ENCODE measurements at regions of chr10 and their contacts with region 1.

Region 1: DNA sequence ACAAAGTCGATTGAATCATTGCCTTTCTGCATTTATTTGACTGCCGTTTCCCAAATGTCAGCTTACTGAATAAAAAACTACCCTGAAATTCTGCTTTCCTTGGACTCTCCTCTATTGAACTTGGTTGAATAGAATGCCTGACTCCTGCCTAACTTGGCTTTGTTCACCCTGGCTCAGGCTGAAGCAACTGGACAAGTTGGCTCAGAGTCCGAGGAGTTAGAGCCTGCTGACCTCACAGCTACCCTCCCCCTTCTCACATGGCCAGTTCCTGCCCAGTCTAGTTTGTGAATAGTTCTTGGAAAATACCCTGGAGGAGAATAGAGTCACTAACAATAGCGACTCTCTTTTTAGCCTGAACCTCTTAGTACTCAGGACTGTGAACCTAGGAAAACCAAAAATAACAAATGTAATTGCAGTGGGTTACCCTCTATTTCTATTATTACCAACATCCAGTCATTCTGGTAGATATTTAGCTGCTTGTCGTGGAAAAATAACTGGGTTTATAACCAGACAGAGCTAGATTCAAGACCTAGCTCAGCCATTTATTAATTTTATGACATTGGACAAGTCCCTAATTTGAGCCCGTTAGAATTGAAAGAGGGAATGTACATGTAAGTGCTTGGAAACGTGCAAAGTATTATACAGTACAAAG is 17.3 kb upstream of the NRBF2 start:
- DNase-seq: peak; percentile 83
- ATAC-seq: peak; percentile 96

Region 2: GRCh38 chr10:63064706-63065105 is 51.2 kb before region 1 on chr10:
- intact Hi-C with region 1: no loop called
- DNase-seq: no peak
- ATAC-seq: no peak

Region 3: DNA sequence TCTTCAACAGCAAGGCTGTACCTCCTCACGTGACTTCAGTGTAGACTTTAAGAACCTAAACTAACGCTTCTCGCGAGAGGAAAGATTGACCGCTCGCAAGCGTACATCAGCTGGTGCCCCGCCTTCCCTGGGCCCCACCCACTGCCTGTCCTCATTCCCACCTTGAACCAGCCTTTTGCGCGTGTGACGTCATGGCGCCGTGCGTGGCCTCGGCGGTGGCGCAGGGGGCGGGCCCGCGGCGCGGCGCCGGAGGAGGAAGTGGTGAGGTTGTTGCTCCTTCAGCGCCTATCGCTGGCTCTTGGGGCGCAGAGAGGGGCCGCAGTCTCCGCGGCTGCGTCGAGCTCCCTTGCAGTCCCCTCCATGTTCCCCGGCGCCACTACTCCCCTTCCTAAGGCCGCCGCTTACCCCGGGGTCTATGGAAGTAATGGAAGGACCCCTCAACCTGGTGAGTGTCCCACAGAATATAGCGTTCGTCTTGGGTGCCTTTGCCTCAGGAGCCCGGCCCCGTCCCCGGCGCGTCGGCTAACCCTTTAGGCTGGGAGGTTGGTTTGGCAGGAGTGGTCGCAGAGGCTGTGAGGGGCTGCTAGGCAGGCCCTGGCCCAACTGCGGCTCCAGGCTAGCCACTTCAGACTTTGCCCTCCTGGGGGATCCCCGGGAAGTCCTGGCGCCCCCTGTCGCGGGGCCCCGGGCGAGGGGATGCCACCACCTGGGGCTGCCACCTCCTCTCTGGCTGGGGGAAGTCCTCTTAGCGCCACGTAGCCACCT is 17.4 kb after region 1 on chr10 and contains the start of gene NRBF2:
- intact Hi-C with region 1: loop called (anchors 2 kb)
- DNase-seq: peak; percentile 99
- ATAC-seq: peak; percentile 100
- total RNA-seq, gene NRBF2: 10.4 TPM